GM18951 (cell line): ENCODE measurements at regions of chr15 and their contacts with region 1.

Region 1: DNA sequence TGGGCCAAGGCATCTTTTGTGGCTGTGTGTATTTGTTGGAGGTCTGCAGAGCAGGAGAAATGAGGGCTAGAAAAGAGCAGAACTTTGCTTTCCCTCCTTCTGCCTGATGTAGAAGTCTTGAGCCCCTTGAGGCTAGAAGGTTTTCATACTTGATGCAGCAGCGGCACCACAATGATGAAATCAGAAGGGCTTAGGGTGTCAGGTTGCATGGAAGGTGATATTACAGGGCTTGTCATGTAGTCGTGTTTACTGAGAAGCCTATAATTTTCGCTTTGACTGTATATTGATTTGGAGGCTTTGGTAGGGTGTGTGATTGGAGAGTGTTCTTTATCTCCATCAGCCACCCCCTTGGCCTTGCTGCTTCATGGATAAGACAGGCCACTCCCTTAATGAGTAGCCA is 339.8 kb downstream of the THSD4 start:
- POLR2A ChIP-seq: no peak

Region 2: DNA sequence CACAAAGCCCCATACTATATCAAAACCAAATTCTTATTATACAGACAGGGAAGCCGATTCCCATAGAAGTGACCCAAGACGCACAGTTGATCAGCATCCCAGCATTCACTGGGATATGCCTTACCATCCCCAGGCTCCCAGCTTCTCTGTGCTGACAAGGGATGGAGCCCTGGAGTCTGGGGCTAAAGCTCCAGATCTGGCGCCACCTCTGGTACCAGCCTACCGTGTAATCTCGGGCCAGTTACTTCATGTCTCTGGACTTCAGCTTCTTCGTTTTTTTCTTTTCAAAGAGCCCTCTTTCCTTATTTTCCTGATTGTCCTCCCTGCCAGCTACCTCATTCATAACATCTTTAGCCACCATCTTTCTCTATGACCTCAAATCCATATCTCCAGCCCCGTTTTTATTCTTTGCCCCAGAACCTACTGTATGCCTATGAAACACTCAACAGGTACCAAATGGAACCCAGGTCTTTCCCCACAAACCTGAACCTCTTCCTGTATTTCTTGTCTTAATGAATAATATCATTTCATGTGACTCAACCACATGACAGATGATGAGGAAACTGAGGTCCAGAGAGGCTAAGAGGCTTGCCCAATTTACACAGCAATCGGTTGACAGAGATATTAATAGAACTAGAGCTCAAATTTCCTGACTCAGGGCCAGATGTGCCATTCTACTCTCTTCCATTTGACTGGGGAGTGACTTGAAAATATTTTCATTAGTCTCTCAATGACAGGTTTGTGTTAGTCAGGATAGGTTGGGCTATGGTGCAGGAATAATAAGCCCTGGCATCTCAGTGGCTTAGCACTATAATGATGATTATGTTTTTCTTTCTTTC is 1272.0 kb before region 1 on chr15:
- in situ Hi-C with region 1: no loop called
- POLR2A ChIP-seq: no peak

Region 3: GRCh38 chr15:71728881-71729280 is 273.8 kb after region 1 on chr15:
- in situ Hi-C with region 1: loop called (anchors 10 kb)
- POLR2A ChIP-seq: no peak